ENCODE measurements at regions of chr17 and their contacts with region 1.

Region 1: DNA sequence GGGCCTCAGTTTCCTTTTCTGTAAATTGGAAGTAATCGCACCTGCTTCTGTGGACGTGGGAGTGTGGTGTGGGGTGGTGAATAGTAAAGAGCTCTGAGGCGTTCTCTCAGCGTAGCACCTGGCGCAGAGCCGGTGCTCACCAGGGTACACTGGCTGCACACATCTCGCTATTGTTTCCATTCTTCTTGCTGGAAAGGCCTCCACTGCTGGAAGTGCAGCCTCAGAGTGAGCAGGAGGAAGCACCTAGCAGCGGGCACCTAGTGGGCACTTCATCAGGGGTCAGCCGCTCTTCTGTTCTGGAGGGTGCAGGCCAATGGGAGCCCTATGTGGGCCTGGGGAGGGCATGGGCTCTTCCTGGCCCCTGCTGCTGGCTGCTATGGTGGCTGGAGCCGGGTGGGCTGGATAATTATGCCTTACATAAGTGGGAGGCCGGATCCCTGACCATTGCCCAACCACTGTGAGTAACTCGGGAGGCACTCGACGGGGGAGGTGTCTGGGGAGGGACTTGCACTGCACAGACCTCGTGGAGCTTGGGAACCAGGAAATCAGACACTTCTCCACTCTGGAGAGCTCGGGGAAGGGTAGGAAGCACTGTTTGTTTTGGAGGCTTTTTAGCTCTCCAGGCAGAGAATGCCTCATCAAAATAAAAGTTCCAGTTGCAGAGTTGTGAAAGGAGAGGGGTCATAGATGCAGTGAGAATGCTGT is 1.7 kb downstream of the MAP2K3 start:
- DNase-seq: peak; percentile 90
- ATAC-seq: peak; percentile 76

Region 2: GRCh38 chr17:21318439-21318838 is 32.2 kb after region 1 on chr17:
- intact Hi-C with region 1: loop called (anchors 1 kb)
- DNase-seq: peak; percentile 59
- ATAC-seq: no peak

Region 3: DNA sequence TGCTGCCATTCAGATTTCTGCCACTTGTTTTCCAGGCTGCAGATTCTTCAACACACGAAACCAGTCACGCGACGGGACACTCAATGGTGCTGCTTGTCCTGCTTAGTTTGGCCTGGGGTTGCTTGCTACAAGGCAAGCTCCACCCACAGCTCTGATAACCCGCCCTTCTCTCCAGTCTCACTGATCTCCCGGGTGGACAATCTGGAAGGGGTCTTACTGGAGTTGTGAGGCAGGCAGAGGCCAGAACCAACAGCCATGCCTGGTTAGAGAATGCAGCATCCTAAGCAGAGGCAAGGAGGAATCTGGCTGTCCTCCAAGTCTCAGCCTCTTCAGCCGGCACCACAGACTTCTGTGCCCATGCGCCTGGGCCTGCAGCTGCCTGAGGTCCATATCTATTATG is 209.1 kb after region 1 on chr17:
- intact Hi-C with region 1: no loop called
- DNase-seq: no peak
- ATAC-seq: no peak